ENCODE measurements at regions of chr17 and their contacts with region 1.

Region 1: DNA sequence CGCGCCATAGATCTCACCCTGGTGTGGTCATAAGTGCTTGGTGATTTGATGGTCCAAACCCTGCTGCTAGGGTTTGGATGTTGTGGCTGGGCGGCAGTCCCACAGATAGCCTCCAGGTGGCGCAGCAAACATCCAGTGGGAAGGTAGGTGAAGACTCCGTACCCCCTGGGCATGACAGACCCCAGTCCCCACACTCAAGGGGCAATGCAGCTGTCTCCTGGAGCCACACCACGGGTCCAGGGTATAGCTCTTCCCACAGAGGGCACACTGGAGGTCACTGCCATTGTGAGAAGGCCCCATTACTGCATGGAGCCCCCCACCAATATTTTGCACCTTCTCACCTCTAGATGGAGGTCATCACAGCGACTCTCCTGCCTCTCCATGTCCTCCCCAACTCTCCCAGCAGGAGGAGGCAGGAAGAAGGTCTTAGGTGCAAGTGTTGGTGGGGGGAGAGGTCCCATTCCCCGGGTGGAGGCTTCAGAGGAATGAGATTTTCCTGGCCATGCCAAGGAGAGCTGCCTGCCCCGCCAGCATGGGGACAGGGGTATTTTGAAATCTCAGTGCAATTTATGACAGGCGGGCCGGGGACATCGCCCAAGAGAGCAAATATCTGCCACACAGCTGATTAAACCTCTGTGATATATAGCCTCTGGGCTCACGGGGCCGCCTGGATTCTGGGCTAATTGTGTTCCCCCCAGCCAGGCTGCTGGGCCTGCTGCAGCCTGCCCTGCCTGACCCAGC is 17.1 kb upstream of the C17orf113 start:
- DNase-seq: peak; percentile 61
- H3K4me3 Mint-ChIP-seq: no peak overlapping the region
- H3K27ac Mint-ChIP-seq: no peak overlapping the region
- H3K4me1 Mint-ChIP-seq: no peaks in the 10 kb centered on the region
- H3K27me3 Mint-ChIP-seq: peaks cover 12% of the 10 kb centered on the region
- CTCF ChIP-seq: peak; percentile 85

Region 2: GRCh38 chr17:42077755-42078154 is 10.2 kb after region 1 on chr17:
- CTCF ChIA-PET with region 1: interaction called, 10 read pairs
- POLR2A ChIA-PET with region 1: no interaction called
- intact Hi-C with region 1: no loop called
- DNase-seq: no peak
- H3K4me3 Mint-ChIP-seq: no peak overlapping the region
- H3K27ac Mint-ChIP-seq: no peak overlapping the region
- H3K4me1 Mint-ChIP-seq: peaks cover 6% of the 10 kb centered on the region
- H3K27me3 Mint-ChIP-seq: no peaks in the 10 kb centered on the region
- CTCF ChIP-seq: no peak

Region 3: DNA sequence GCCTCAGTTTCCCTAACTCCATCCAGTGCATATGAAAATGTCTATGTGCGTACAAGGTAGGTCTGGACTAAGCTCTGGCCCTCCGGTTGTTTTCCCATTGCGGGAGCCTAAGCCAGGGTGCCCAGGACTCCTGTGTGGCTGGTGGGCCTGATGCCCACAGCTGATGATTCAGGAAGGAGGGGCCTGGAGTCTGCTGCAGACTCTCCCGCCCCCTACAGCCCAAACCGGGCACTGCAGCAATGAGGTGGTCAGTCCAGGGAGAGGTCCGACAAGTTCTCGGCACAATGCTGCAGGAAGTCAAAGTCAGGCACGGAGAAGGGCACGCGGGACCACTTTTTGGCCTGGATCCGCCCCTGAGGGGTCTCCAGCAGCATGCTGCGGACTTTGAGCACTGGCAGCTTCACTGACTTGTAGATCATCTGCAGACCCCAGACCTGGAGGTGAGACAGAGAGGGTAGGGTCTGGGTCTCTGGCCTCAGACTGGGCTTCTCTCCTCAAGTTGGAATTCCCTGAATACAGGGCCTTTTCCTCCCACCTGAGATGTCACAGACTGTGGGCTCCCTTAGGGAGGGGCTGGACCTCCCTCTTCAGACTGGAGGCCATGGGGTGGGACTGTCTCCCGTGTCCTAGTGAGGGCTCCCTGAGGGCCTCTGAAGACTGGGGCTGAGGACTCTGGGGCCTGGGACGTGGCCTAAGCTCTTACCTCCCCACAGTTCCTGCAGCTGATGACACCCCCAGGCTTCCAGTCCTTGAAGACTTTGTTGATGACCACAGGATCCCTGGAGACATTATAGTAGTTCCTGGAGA is 34.2 kb after region 1 on chr17:
- CTCF ChIA-PET with region 1: interaction called, 9 read pairs
- POLR2A ChIA-PET with region 1: no interaction called
- intact Hi-C with region 1: loop called (anchors 1 kb)
- DNase-seq: peak; percentile 69
- H3K4me3 Mint-ChIP-seq: no peak overlapping the region
- H3K27ac Mint-ChIP-seq: no peak overlapping the region
- H3K4me1 Mint-ChIP-seq: no peaks in the 10 kb centered on the region
- H3K27me3 Mint-ChIP-seq: no peaks in the 10 kb centered on the region
- CTCF ChIP-seq: peak; percentile 90

Region 4: DNA sequence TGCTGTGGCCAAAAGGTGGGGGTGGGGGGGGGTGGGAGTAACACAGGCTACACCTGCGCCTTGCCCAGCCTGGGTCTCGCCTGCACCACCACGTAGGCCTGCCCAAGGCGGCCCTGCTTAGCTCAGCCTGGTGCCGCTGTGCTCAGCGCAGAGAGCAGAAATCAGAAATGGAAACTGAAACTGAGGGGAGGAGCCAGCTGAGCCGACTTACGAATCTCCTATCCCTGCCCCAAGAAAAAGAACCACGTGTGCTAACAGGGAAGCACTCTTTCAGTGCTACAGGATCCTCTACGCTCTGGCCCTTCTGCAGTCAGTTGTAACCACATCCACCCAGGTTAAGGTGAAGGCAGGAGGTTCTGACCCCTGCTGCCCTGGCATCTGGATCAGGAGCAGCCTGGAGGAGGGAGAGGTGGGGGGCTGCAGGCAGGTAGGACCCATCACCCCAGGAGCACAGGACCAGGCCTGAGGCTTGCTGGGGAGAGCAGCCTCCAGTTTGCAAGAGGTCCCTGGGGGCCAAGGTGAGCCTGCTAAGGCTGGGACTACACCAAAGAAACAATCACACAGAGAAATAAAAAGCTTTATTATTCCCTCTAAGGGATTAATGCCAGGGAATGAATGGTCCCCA is 45.1 kb after region 1 on chr17 and contains the start of gene DHX58:
- CTCF ChIA-PET with region 1: interaction called, 37 read pairs
- POLR2A ChIA-PET with region 1: no interaction called
- intact Hi-C with region 1: loop called (anchors 1 kb)
- DNase-seq: peak; percentile 64
- H3K4me3 Mint-ChIP-seq: peak within 1 kb of the TSS; percentile 67
- H3K27ac Mint-ChIP-seq: peak within 1 kb of the TSS; percentile 35
- H3K4me1 Mint-ChIP-seq: no peaks in the 10 kb centered on the region
- H3K27me3 Mint-ChIP-seq: no peaks in the 10 kb centered on the region
- CTCF ChIP-seq: no peak
- total RNA-seq, gene DHX58: 2.8 and 4.2 TPM in 2 replicates

Region 5: DNA sequence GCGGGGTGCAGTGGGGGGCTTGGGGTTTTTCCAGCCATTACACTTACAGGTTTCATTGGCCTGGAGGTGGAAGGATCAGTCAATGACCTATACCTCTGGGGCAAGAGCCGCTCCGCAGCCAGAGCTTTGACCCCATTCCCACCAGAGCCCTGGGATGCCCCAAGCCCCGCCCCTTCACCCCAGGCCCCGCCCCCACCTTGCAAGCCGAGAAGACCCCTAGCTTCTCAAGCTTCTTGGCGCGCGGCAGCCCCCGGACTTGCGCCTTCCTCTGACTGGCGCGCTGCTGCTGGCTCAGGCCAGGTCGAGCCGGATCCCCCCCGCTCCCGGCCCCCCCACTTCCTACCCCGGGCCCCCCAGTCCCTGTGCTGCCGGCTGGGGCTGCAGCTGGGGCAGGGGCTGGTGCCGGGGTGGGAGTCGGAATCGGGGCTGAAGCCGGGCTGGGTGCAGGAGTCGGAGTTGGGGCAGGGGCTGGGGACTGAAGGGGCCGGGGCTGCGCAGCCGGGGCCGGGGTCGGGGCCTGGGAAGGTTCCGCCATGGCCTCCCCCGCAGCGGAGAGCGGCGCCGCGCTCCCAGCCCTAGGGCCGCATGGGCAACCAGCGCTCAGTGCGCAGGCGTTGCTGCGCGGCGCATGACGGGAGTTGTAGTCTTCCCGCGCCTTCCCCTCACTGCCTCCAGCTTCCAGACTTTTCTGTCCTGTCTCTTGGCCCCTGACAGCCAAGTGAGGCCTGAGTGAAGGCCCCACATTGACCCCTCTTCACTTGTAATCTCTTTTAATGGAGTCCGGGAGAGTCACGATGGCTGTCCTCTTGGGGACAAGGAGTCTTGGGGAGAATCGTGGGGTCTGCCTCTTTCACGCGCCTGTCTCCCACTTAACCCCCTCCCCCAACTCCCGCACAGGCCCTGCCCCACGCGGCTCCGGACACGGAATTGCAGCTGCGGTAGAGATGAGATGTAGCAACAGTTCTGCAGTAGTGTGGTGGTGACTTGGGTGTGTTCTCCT is 53.5 kb after region 1 on chr17 and contains the start of gene KAT2A:
- CTCF ChIA-PET with region 1: interaction called, 37 read pairs
- POLR2A ChIA-PET with region 1: no interaction called
- intact Hi-C with region 1: loop called (anchors 1 kb)
- DNase-seq: peak; percentile 83
- H3K4me3 Mint-ChIP-seq: peak within 1 kb of the TSS; percentile 53
- H3K27ac Mint-ChIP-seq: no peak within 1 kb of the TSS
- H3K4me1 Mint-ChIP-seq: peaks cover 6% of the 10 kb centered on the region
- H3K27me3 Mint-ChIP-seq: no peaks in the 10 kb centered on the region
- CTCF ChIP-seq: no peak
- total RNA-seq, gene KAT2A: 37.4 and 44.6 TPM in 2 replicates

Region 6: DNA sequence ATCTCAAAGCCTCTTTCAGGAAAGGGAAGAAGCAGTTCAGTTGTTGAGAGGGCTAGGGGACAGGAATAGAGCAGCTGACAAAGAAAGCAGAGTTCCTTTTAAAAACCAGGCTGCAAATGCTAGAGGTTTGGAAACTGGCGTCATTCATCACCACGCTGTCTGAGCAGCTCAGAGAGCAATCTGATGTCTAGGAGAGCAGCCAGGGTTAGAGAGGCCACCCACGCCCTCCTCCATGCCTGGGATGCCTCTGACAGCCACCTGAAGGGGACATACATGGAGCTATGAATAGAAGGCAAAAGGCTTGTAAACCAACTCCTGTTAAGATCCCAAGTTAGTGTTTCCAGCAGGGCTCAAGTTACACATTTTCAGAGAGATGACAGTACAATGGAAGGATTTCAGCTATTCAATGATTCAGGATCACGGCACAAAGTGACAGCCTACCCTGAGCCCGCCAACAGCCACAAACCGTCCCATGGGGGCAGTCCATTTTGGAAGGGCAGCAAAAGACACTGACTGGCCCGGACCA is 74.9 kb after region 1 on chr17:
- CTCF ChIA-PET with region 1: no interaction called
- POLR2A ChIA-PET with region 1: no interaction called
- intact Hi-C with region 1: no loop called
- DNase-seq: no peak
- H3K4me3 Mint-ChIP-seq: no peak overlapping the region
- H3K27ac Mint-ChIP-seq: no peak overlapping the region
- H3K4me1 Mint-ChIP-seq: no peaks in the 10 kb centered on the region
- H3K27me3 Mint-ChIP-seq: no peaks in the 10 kb centered on the region
- CTCF ChIP-seq: no peak

Region 7: GRCh38 chr17:43042025-43042628 is 974.6 kb after region 1 on chr17:
- CTCF ChIA-PET with region 1: no interaction called
- POLR2A ChIA-PET with region 1: no interaction called
- intact Hi-C with region 1: no loop called
- DNase-seq: no peak
- H3K4me3 Mint-ChIP-seq: no peak overlapping the region
- H3K27ac Mint-ChIP-seq: no peak overlapping the region
- H3K4me1 Mint-ChIP-seq: no peaks in the 10 kb centered on the region
- H3K27me3 Mint-ChIP-seq: no peaks in the 10 kb centered on the region
- CTCF ChIP-seq: no peak

Measured in MCF 10A (cell line).